ENCODE measurements at regions of chr10 and their contacts with region 1.

Region 1: DNA sequence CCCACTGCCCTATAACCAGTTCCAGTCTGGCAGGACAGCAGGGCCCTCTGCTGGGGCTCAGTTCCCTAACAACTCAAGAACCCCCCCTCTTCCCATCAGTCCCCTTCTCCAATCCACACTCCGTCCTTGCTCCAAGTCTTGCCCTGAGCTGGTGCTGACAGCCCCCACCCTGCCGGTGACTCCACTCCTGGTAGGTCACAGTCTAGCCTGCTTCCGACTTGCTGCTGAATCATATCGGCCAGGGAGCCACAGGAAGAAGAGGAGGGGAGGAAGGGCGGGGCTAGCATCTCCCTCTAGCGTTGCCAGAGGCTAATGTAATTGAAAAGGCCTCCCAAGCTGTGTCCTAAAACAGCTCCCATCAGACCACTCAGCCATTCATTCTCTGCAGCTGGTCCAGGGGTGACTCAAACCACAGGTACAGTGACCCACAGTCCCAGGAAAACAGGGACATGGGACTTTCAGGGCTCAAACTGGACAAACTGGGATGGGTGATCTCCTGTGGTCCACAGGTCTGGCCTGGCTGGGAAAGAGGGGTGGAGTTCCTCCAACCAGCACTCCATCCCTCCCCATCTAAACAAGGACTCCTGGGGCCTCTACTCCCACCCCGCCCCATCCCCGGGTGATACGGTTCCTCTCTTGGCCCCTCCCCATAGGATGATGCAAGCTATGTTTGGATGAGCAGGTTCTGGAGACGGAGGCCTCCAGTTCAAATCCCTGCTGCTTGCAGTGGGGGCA is 158.8 kb downstream of the SH3PXD2A start:
- DNase-seq: peak; percentile 92
- H3K4me3 Mint-ChIP-seq: peak overlapping the region; percentile 48
- H3K27ac Mint-ChIP-seq: peak overlapping the region; percentile 77
- H3K4me1 Mint-ChIP-seq: peaks cover 30% of the 10 kb centered on the region
- H3K27me3 Mint-ChIP-seq: no peaks in the 10 kb centered on the region

Region 2: GRCh38 chr10:103605359-103606095 is 91.1 kb before region 1 on chr10:
- CTCF ChIA-PET with region 1: interaction called, 12 read pairs
- POLR2A ChIA-PET with region 1: no interaction called
- intact Hi-C with region 1: no loop called
- DNase-seq: peak; percentile 60
- H3K4me3 Mint-ChIP-seq: no peak overlapping the region
- H3K27ac Mint-ChIP-seq: no peak overlapping the region
- H3K4me1 Mint-ChIP-seq: no peaks in the 10 kb centered on the region
- H3K27me3 Mint-ChIP-seq: no peaks in the 10 kb centered on the region

Region 3: GRCh38 chr10:103659674-103660363 is 36.8 kb before region 1 on chr10:
- CTCF ChIA-PET with region 1: no interaction called
- POLR2A ChIA-PET with region 1: no interaction called
- intact Hi-C with region 1: loop called (anchors 2 kb)
- DNase-seq: peak; percentile 71
- H3K4me3 Mint-ChIP-seq: peak overlapping the region; percentile 82
- H3K27ac Mint-ChIP-seq: peak overlapping the region; percentile 74
- H3K4me1 Mint-ChIP-seq: peaks cover 5% of the 10 kb centered on the region
- H3K27me3 Mint-ChIP-seq: no peaks in the 10 kb centered on the region

Region 4: GRCh38 chr10:103678178-103678526 is 18.4 kb before region 1 on chr10:
- CTCF ChIA-PET with region 1: interaction called, 3 read pairs
- POLR2A ChIA-PET with region 1: interaction called, 4 read pairs
- intact Hi-C with region 1: loop called (anchors 1 kb)
- DNase-seq: peak; percentile 94
- H3K4me3 Mint-ChIP-seq: peak overlapping the region; percentile 84
- H3K27ac Mint-ChIP-seq: peak overlapping the region; percentile 90
- H3K4me1 Mint-ChIP-seq: peaks cover 24% of the 10 kb centered on the region
- H3K27me3 Mint-ChIP-seq: no peaks in the 10 kb centered on the region

Region 5: GRCh38 chr10:103765981-103766380 is 69.4 kb after region 1 on chr10:
- CTCF ChIA-PET with region 1: no interaction called
- POLR2A ChIA-PET with region 1: no interaction called
- intact Hi-C with region 1: loop called (anchors 5 kb)
- DNase-seq: peak; percentile 89
- H3K4me3 Mint-ChIP-seq: no peak overlapping the region
- H3K27ac Mint-ChIP-seq: peak overlapping the region; percentile 15
- H3K4me1 Mint-ChIP-seq: peaks cover 57% of the 10 kb centered on the region
- H3K27me3 Mint-ChIP-seq: no peaks in the 10 kb centered on the region